Motor neuron (in vitro differentiated cells): ENCODE measurements at regions of chr1 and their contacts with region 1.

Region 1: GRCh38 chr1:70436622-70437251 is 25.7 kb downstream of the CTH start:
- ATAC-seq: peak in 3 of 8 experiments; percentile 21 to 52 (median 34)
- H3K4me3 ChIP-seq: no peak overlapping the region
- H3K27ac ChIP-seq: no peak overlapping the region
- H3K4me1 ChIP-seq: peaks cover 0 to 2% of the 10 kb centered on the region in 2 donors

Region 2: DNA sequence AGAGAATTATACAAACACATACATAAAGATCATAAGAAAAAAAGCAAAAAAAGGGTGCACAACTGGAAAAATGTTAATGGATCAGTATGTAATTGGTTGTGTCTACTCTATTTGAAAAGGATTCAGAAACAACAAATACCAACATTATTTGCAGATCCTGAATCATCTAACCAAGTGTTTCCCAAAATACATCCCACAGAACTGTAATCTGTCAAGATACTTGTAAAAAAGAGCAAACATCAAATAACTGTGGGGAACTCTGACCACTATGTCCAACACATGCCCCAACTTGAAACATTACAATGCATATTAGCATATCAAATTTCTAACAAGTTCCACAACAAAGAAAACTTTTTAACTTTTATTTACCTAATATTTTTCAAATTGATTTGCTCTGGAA is 104.8 kb before region 1 on chr1:
- in situ Hi-C with region 1: loop called in 1 of 9 experiments (anchors 25 kb)
- ATAC-seq: no peak
- H3K4me3 ChIP-seq: no peak overlapping the region
- H3K27ac ChIP-seq: no peak overlapping the region
- H3K4me1 ChIP-seq: no peaks in the 10 kb centered on the region